CD4-positive, alpha-beta T cell (primary cell): ENCODE measurements at regions of chr6 and their contacts with region 1.

Region 1: DNA sequence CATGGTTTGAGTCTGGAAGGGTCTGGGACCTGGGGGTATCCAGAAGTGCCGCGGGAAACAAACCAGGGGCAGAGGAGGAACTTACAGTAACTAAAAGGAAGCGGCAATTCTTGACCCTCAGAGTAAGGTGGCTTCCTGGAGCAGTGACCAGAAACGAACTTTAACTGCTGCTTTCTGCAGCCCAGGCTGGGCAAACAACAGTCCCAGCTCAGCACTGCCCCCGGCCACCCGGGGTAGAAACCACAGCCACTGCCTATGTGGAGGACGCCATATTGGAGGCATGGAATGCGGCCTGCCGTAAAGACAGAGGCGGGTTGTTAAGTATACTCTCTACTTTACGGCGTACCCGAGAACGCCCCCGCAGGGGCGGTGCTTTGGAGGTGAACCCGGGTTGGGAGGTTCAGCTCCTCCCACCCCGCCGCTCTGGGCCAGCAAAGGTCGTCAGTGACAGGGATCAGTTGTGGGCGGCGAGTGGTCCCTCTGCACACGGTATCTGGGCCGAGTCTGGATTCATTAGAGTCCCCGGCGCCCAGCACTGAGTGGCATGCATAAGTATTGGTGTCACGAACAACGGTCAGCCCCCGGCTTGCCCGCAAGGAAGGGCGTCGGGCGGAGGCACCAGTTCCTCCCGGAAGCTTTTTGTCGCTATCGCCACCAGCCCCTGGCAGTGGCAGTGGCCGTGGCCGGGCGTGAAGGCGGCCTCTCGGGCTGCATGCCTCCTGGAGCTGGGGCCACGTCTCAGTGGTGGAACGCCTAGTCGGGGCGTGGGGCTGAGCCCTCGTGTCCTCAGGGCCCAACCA is at the start of gene PDSS2:
- DNase-seq: peak; percentile 89 to 98 (median 96)
- ATAC-seq: peak; percentile 96
- H3K4me3 ChIP-seq: peak within 1 kb of the TSS; percentile 91
- H3K4me3 Mint-ChIP-seq: peak within 1 kb of the TSS; percentile 94
- H3K27ac ChIP-seq: peak within 1 kb of the TSS; percentile 71 to 79
- H3K27ac Mint-ChIP-seq: peak within 1 kb of the TSS; percentile 97
- H3K4me1 ChIP-seq: peaks cover 16% of the 10 kb centered on the region
- H3K4me1 Mint-ChIP-seq: peaks cover 23% of the 10 kb centered on the region
- H3K27me3 ChIP-seq: no peaks in the 10 kb centered on the region
- H3K27me3 Mint-ChIP-seq: no peaks in the 10 kb centered on the region
- CTCF ChIP-seq: no peak
- total RNA-seq, gene PDSS2: 5.8 to 6.6 TPM

Region 2: GRCh38 chr6:107026965-107027364 is 432.5 kb before region 1 on chr6:
- CTCF ChIA-PET with region 1: interaction called, 9 read pairs
- POLR2A ChIA-PET with region 1: interaction called, 3 read pairs
- intact Hi-C with region 1: loop called in 1 of 2 experiments (anchors 5 kb)
- DNase-seq: no peak
- ATAC-seq: no peak
- H3K4me3 ChIP-seq: no peak overlapping the region
- H3K4me3 Mint-ChIP-seq: peak overlapping the region; percentile 76
- H3K27ac ChIP-seq: no peak overlapping the region
- H3K27ac Mint-ChIP-seq: no peak overlapping the region
- H3K4me1 ChIP-seq: peaks cover 22% of the 10 kb centered on the region
- H3K4me1 Mint-ChIP-seq: peaks cover 27% of the 10 kb centered on the region
- H3K27me3 ChIP-seq: no peaks in the 10 kb centered on the region
- H3K27me3 Mint-ChIP-seq: no peaks in the 10 kb centered on the region
- CTCF ChIP-seq: no peak

Region 3: GRCh38 chr6:107964671-107965340 is 505.3 kb after region 1 on chr6:
- CTCF ChIA-PET with region 1: no interaction called
- POLR2A ChIA-PET with region 1: no interaction called
- intact Hi-C with region 1: loop called in 1 of 2 experiments (anchors 10 kb)
- DNase-seq: no peak
- ATAC-seq: no peak
- H3K4me3 ChIP-seq: no peak overlapping the region
- H3K4me3 Mint-ChIP-seq: no peak overlapping the region
- H3K27ac ChIP-seq: no peak overlapping the region
- H3K27ac Mint-ChIP-seq: no peak overlapping the region
- H3K4me1 ChIP-seq: no peaks in the 10 kb centered on the region
- H3K4me1 Mint-ChIP-seq: no peaks in the 10 kb centered on the region
- H3K27me3 ChIP-seq: no peaks in the 10 kb centered on the region
- H3K27me3 Mint-ChIP-seq: no peaks in the 10 kb centered on the region
- CTCF ChIP-seq: no peak